ENCODE measurements at regions of chr17 and their contacts with region 1.

Region 1: DNA sequence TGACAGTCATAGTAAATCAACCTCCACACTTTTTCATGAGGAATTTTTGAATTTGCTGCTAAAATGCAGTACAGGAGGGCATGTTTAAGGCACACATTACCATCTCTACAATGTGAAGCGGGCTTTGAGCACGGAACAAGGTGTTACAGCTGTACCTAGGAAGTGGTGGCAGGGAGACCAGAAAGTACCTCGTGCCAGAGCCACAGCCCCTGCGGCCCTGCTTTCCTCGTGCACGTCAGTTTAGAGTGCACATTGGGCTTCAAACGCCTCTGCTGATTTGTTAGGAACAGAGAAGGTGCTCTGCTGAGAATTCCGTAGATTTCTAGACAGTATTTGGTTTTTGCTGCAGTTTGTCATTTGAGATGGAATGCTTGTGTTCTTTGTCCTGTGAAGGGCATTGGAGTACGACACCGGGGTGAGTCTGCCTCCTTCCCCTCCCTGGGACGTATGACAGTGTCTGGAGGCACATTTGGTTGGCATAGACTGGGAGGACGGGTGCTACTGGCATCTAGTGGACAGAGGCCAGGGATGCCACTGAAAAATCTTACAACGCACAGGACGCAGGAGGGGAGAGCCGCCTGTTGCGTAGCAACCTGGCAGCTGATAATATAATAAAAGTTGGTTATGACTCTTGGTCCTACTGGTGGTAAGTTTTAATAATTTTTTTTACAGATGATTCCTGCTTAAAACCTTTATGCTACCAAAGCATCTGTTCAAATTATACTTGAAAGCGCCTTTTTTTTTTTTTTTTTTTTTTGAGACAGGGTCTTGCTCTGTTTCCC is 9.1 kb downstream of the FOXK2 start:
- DNase-seq: peak; percentile 87
- H3K4me3 ChIP-seq: peak overlapping the region in 1 of 3 experiments; percentile 5
- H3K27ac ChIP-seq: peak overlapping the region; percentile 89
- H3K4me1 ChIP-seq: peaks cover 50% of the 10 kb centered on the region
- H3K27me3 ChIP-seq: no peaks in the 10 kb centered on the region
- CTCF ChIP-seq: peak; percentile 90 to 93

Region 2: DNA sequence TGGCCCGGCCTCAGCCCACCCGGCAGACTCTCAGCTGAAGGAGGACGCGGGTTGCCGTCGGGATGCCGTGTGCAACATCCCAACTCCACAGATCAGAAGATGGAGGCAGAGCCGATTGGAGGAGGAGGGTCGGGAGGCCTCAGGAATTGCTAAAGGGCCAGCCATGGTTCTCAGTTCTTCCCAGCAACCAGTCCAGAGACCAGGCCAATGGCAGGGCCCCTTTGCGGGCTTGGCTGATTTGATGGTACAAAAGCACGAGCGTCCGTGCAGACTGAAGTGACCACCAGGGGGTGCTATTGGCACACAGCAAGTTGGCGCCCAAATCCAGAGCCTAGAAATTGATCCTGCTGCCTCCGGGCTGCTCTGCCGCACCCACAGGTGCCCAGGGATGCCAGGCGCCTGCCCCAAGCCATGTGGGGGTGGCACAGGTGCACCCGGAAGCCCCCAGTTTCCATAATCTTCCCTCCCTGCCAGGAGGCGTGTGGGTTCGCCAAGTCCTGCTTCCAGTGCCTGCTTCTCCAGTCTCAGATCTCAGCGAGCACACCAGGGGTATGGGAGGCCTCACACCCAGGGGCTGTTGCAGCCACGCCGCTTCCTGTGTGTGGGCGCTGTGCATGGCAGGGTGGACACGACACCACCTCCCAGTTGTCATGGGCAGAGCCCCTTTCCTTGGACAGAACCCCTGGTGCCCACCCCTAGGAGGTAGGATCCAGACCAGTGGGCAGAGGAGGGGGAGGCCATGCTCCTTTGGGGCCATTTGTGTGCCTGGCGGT is 176.8 kb before region 1 on chr17:
- CTCF ChIA-PET with region 1: no interaction called
- dilution Hi-C with region 1: no loop called
- in situ Hi-C with region 1: loop called in 1 of 2 experiments (anchors 5 kb)
- intact Hi-C with region 1: loop called (anchors 1 kb)
- DNase-seq: peak; percentile 64
- H3K4me3 ChIP-seq: no peak overlapping the region
- H3K27ac ChIP-seq: no peak overlapping the region
- H3K4me1 ChIP-seq: peaks cover 20% of the 10 kb centered on the region
- H3K27me3 ChIP-seq: no peaks in the 10 kb centered on the region
- CTCF ChIP-seq: peak; percentile 86 to 94

Region 3: GRCh38 chr17:82384730-82385481 is 143.8 kb before region 1 on chr17:
- CTCF ChIA-PET with region 1: no interaction called
- dilution Hi-C with region 1: no loop called
- in situ Hi-C with region 1: no loop called
- intact Hi-C with region 1: loop called (anchors 1 kb)
- DNase-seq: peak; percentile 84
- H3K4me3 ChIP-seq: peak overlapping the region in 1 of 3 experiments; percentile 14
- H3K27ac ChIP-seq: no peak overlapping the region
- H3K4me1 ChIP-seq: peaks cover 24% of the 10 kb centered on the region
- H3K27me3 ChIP-seq: no peaks in the 10 kb centered on the region
- CTCF ChIP-seq: peak; percentile 15 to 57

Region 4: GRCh38 chr17:82457997-82458864 is 70.4 kb before region 1 on chr17 and contains the start of gene NARF:
- CTCF ChIA-PET with region 1: no interaction called
- dilution Hi-C with region 1: no loop called
- in situ Hi-C with region 1: no loop called
- intact Hi-C with region 1: loop called (anchors 1 kb)
- DNase-seq: peak; percentile 99
- H3K4me3 ChIP-seq: peak within 1 kb of the TSS; percentile 43 to 88 (median 79)
- H3K27ac ChIP-seq: peak within 1 kb of the TSS; percentile 81
- H3K4me1 ChIP-seq: peaks cover 7% of the 10 kb centered on the region
- H3K27me3 ChIP-seq: no peaks in the 10 kb centered on the region
- CTCF ChIP-seq: no peak
- total RNA-seq, gene NARF: 25.0 to 31.5 TPM

Region 5: DNA sequence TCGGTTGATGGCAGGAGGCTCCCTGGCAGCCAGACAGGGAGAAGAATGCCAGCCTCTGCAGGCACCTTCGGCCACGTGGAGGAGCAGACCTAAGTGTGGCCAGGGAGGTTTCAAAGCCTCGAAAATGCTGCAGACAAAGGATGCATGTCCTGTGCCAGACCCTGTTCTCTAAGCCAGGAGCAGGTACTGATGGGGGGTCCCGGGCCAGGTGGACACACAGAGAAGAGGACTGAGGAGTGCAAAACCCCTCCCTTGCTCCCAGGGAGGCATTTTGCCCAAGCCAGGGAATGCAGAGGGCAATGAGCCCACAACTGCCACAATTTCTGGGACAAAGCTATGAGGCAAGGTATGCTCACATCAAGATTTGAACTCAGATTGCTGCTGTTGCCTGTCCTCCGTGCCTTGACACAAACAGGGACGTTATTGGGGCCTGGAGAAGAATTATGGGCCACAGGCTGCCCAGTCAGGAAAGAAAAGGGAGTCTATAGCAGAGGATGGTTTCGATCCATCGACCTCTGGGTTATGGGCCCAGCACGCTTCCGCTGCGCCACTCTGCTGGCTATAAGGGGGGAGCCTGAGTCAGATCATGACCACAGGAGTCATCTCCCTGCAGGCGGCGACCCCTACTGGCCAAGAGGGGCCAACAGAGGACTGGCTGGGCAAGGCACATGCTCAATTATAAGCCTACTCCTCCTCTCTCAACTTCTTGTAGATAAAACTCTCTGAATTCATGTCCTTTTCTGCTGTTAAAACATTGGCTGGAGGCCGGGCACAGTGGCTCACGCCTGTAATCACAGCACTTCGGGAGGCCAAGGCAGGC is 34.2 kb before region 1 on chr17:
- CTCF ChIA-PET with region 1: interaction called, 24 read pairs
- dilution Hi-C with region 1: no loop called
- in situ Hi-C with region 1: no loop called
- intact Hi-C with region 1: loop called (anchors 2 kb)
- DNase-seq: peak; percentile 95
- H3K4me3 ChIP-seq: no peak overlapping the region
- H3K27ac ChIP-seq: no peak overlapping the region
- H3K4me1 ChIP-seq: peaks cover 24% of the 10 kb centered on the region
- H3K27me3 ChIP-seq: no peaks in the 10 kb centered on the region
- CTCF ChIP-seq: peak; percentile 85 to 95